CD8-positive, alpha-beta memory T cell (primary cell): ENCODE measurements at regions of chr3 and their contacts with region 1.

Region 1: DNA sequence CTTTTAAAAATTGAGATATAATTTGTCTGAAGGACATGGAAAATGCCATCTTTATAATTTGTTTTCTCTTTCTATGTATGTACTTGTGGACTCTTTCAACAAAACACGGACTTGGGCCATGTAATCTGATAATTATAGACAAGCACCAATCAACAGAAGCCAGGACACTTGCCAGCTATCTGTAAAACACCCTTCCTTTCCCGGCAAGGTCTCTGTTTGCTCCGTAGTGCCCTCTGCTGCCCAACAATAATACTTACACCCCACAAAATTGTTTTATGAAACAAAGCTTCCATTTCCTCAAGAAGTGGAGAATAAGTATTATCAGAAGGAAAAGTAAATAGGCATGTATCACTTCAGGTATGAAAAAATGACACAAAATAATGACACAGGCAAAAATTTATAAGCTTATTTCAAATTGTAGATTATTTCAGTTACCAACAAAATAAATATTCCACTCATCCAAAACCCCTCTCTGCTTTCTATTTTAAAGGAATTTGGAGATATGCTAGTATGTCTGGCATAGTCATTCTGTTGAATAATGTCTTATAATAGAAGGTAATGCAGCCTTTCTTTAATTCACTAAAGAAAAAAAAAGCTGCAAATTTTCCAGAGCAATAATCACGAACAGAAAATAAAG is 32.8 kb downstream of the MYH15 start:
- DNase-seq: peak; percentile 31 to 56 (median 43)
- H3K4me3 ChIP-seq: no peak overlapping the region
- H3K4me3 Mint-ChIP-seq: no peak overlapping the region
- H3K27ac ChIP-seq: no peak overlapping the region
- H3K27ac Mint-ChIP-seq: no peak overlapping the region
- H3K4me1 ChIP-seq: no peaks in the 10 kb centered on the region
- H3K4me1 Mint-ChIP-seq: peaks cover 3 to 4% (median 4%) of the 10 kb centered on the region in 3 donors
- H3K27me3 ChIP-seq: no peaks in the 10 kb centered on the region
- H3K27me3 Mint-ChIP-seq: peaks cover 2 to 14% of the 10 kb centered on the region in 2 donors

Region 2: DNA sequence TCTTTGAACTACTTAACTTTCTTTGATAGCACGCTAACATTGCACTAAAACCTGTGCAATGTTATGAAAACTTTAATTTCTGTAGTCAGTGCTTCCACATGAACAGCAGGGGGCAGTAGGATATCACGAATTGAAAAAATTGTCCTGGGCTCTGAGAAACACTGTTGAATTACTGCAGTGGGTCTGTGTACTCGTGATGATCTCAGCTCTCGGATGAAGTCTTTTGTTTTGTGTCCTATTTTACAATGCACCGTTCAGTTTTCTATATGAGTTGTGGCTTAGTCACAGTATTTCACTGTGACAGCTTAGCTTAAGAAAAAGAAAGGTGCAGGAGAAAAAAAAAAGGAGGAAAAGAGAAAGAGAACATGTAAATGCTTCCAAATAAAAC is 1241.7 kb before region 1 on chr3:
- CTCF ChIA-PET with region 1: interaction called, 15 read pairs
- POLR2A ChIA-PET with region 1: no interaction called
- DNase-seq: peak in 4 of 5 donors; percentile 28 to 64 (median 58)
- H3K4me3 ChIP-seq: no peak overlapping the region
- H3K4me3 Mint-ChIP-seq: peak overlapping the region in 6 of 7 donors; percentile 15 to 58 (median 40)
- H3K27ac ChIP-seq: no peak overlapping the region
- H3K27ac Mint-ChIP-seq: no peak overlapping the region
- H3K4me1 ChIP-seq: peaks cover 7% of the 10 kb centered on the region
- H3K4me1 Mint-ChIP-seq: peaks cover 9 to 21% (median 17%) of the 10 kb centered on the region in 3 donors
- H3K27me3 ChIP-seq: no peaks in the 10 kb centered on the region
- H3K27me3 Mint-ChIP-seq: peaks cover 0 to 1% of the 10 kb centered on the region in 2 donors

Region 3: GRCh38 chr3:108489771-108490170 is 12.1 kb after region 1 on chr3:
- CTCF ChIA-PET with region 1: interaction called, 12 read pairs
- POLR2A ChIA-PET with region 1: no interaction called
- DNase-seq: peak; percentile 6 to 55 (median 48)
- H3K4me3 ChIP-seq: no peak overlapping the region
- H3K4me3 Mint-ChIP-seq: no peak overlapping the region
- H3K27ac ChIP-seq: no peak overlapping the region
- H3K27ac Mint-ChIP-seq: peak overlapping the region in 1 of 8 donors; percentile 2
- H3K4me1 ChIP-seq: no peaks in the 10 kb centered on the region
- H3K4me1 Mint-ChIP-seq: peaks cover 4 to 5% (median 5%) of the 10 kb centered on the region in 3 donors
- H3K27me3 ChIP-seq: no peaks in the 10 kb centered on the region
- H3K27me3 Mint-ChIP-seq: no peaks in the 10 kb centered on the region